B cell (primary cell): ENCODE measurements at regions of chr1 and their contacts with region 1.

Region 1: GRCh38 chr1:92960395-92961130 is 699 bp downstream of the DIPK1A start:
- DNase-seq: peak; percentile 86
- ATAC-seq: peak; percentile 42
- H3K4me3 ChIP-seq: peak overlapping the region; percentile 77 to 91 (median 86)
- H3K4me3 Mint-ChIP-seq: peak overlapping the region; percentile 92
- H3K27ac ChIP-seq: peak overlapping the region; percentile 87 to 98
- H3K27ac Mint-ChIP-seq: peak overlapping the region; percentile 94
- H3K4me1 ChIP-seq: peaks cover 62 to 80% of the 10 kb centered on the region in 2 donors
- H3K4me1 Mint-ChIP-seq: peaks cover 44% of the 10 kb centered on the region
- H3K27me3 ChIP-seq: no peaks in the 10 kb centered on the region
- H3K27me3 Mint-ChIP-seq: no peaks in the 10 kb centered on the region
- CTCF ChIP-seq: peak; percentile 66

Region 2: DNA sequence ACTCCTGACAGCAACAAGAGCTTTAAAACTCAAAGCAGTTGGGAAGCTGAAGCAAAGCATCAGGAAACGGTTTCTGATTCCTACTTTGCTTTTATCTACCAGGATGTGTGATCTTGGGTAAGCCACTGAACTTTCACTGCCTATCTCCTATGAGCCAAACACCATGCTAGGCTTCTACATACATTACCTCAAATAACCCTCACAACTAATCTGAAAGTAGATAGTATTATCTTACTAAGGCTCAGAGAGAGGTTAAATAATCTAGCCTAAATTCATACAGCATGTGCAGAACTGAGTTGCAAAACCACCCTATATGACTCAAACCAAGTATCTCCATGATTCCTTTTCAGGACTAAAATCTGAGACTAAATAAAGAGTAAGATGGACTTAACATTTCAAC is 259.4 kb before region 1 on chr1:
- CTCF ChIA-PET with region 1: no interaction called
- POLR2A ChIA-PET with region 1: no interaction called
- intact Hi-C with region 1: no loop called
- DNase-seq: no peak
- ATAC-seq: no peak
- H3K4me3 ChIP-seq: no peak overlapping the region
- H3K4me3 Mint-ChIP-seq: no peak overlapping the region
- H3K27ac ChIP-seq: no peak overlapping the region
- H3K27ac Mint-ChIP-seq: no peak overlapping the region
- H3K4me1 ChIP-seq: no peaks in the 10 kb centered on the region
- H3K4me1 Mint-ChIP-seq: no peaks in the 10 kb centered on the region
- H3K27me3 ChIP-seq: no peaks in the 10 kb centered on the region
- H3K27me3 Mint-ChIP-seq: no peaks in the 10 kb centered on the region
- CTCF ChIP-seq: no peak

Region 3: DNA sequence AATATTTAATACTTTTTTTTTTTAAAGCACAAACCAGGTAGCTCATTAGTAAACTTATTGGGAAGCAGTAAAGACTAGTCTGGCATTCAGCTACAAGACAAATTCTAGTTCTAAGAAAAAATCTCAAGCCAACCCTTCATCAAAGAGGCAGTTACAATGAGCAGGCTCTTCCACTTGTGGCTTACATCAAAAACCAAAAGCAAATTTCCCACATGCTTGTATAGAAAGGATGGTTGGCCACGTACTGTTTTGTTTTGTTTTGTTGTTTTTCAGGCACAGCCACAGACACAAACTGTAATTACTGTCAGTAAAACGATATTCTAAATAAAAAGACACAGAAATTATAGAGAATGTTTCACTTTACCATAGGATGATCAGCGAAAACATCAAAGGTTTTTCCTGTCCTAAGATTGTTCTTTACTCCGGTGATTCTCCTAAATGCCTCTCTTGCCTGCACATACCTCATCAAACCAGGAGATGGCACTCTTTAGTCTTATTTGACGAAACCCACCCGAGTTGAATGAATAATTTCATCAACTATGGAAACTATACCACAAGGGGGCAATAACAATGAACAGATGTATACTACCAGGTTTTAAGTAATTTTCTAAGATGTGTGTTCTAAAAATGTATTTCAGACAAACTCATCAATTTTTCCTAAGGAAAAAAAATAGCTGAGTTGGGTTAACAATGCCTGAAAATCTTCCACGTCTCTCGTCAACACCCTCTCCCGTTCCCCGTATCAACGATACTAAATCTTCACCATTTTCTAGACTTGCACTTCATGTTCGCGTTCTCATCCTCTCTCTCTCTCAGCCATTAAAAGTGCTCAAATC is 101.8 kb before region 1 on chr1:
- CTCF ChIA-PET with region 1: interaction called, 200 read pairs
- POLR2A ChIA-PET with region 1: interaction called, 11 read pairs
- intact Hi-C with region 1: loop called (anchors 1 kb)
- DNase-seq: peak; percentile 87
- ATAC-seq: peak; percentile 98
- H3K4me3 ChIP-seq: no peak overlapping the region
- H3K4me3 Mint-ChIP-seq: peak overlapping the region; percentile 2
- H3K27ac ChIP-seq: peak overlapping the region in 1 of 2 donors; percentile 38
- H3K27ac Mint-ChIP-seq: peak overlapping the region; percentile 0
- H3K4me1 ChIP-seq: peaks cover 0 to 4% of the 10 kb centered on the region in 2 donors
- H3K4me1 Mint-ChIP-seq: peaks cover 13% of the 10 kb centered on the region
- H3K27me3 ChIP-seq: no peaks in the 10 kb centered on the region
- H3K27me3 Mint-ChIP-seq: no peaks in the 10 kb centered on the region
- CTCF ChIP-seq: peak; percentile 99

Region 4: GRCh38 chr1:92910081-92910480 is 50.5 kb before region 1 on chr1:
- CTCF ChIA-PET with region 1: interaction called, 5 read pairs
- POLR2A ChIA-PET with region 1: no interaction called
- intact Hi-C with region 1: loop called (anchors 5 kb)
- DNase-seq: no peak
- ATAC-seq: no peak
- H3K4me3 ChIP-seq: no peak overlapping the region
- H3K4me3 Mint-ChIP-seq: no peak overlapping the region
- H3K27ac ChIP-seq: no peak overlapping the region
- H3K27ac Mint-ChIP-seq: no peak overlapping the region
- H3K4me1 ChIP-seq: peaks cover 10 to 16% of the 10 kb centered on the region in 2 donors
- H3K4me1 Mint-ChIP-seq: peaks cover 50% of the 10 kb centered on the region
- H3K27me3 ChIP-seq: no peaks in the 10 kb centered on the region
- H3K27me3 Mint-ChIP-seq: no peaks in the 10 kb centered on the region
- CTCF ChIP-seq: no peak

Region 5: GRCh38 chr1:92975551-92976232 is 15.1 kb after region 1 on chr1:
- CTCF ChIA-PET with region 1: interaction called, 174 read pairs
- POLR2A ChIA-PET with region 1: interaction called, 116 read pairs
- intact Hi-C with region 1: loop called (anchors 1 kb)
- DNase-seq: peak; percentile 89
- ATAC-seq: peak; percentile 74
- H3K4me3 ChIP-seq: peak overlapping the region in 2 of 5 experiments; percentile 30 to 40
- H3K4me3 Mint-ChIP-seq: peak overlapping the region; percentile 80
- H3K27ac ChIP-seq: peak overlapping the region; percentile 88 to 90
- H3K27ac Mint-ChIP-seq: peak overlapping the region; percentile 98
- H3K4me1 ChIP-seq: peaks cover 88 to 90% of the 10 kb centered on the region in 2 donors
- H3K4me1 Mint-ChIP-seq: peaks cover 78% of the 10 kb centered on the region
- H3K27me3 ChIP-seq: no peaks in the 10 kb centered on the region
- H3K27me3 Mint-ChIP-seq: no peaks in the 10 kb centered on the region
- CTCF ChIP-seq: no peak

Region 6: GRCh38 chr1:92994105-92994712 is 33.6 kb after region 1 on chr1:
- CTCF ChIA-PET with region 1: interaction called, 295 read pairs
- POLR2A ChIA-PET with region 1: interaction called, 32 read pairs
- intact Hi-C with region 1: loop called (anchors 1 kb)
- DNase-seq: peak; percentile 89
- ATAC-seq: peak; percentile 96
- H3K4me3 ChIP-seq: no peak overlapping the region
- H3K4me3 Mint-ChIP-seq: no peak overlapping the region
- H3K27ac ChIP-seq: no peak overlapping the region
- H3K27ac Mint-ChIP-seq: peak overlapping the region; percentile 76
- H3K4me1 ChIP-seq: peaks cover 35 to 41% of the 10 kb centered on the region in 2 donors
- H3K4me1 Mint-ChIP-seq: peaks cover 40% of the 10 kb centered on the region
- H3K27me3 ChIP-seq: no peaks in the 10 kb centered on the region
- H3K27me3 Mint-ChIP-seq: no peaks in the 10 kb centered on the region
- CTCF ChIP-seq: peak; percentile 87

Region 7: DNA sequence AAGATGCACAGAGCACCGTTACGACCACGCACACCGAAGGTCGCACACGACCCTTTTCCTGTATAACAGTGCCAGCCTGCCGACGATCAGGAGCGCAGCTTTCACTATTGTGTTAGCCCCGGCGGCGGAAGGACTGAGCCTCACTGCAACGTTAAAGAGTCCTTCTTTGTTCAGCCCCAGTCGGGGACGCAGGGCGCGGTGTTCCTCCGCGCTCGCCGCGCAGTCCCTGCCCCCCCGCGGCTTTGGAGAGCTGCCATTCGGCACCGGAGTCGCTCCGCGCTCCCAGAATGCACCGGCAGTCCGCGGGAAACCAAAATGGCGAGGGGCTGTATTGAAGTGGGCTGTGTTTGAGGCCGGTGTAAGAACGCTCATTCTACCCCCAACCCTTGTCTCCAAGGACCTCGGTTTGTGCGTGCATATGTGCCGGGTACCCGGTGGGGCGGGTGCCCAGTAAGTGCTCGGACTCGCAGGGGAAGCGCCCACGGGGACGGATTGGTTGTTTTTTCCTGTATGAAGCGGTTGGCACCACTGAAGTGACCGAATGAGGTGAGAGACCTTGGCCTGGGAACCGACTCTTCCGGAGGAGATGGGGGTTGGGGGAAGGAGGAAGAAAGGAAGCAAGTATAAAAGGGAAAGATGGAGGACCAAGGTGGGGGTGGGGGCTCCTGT is 118.6 kb after region 1 on chr1 and contains the start of gene MTF2:
- CTCF ChIA-PET with region 1: interaction called, 3 read pairs
- POLR2A ChIA-PET with region 1: interaction called, 4 read pairs
- intact Hi-C with region 1: loop called (anchors 2 kb)
- DNase-seq: peak; percentile 95
- ATAC-seq: peak; percentile 92
- H3K4me3 ChIP-seq: peak within 1 kb of the TSS; percentile 85 to 98 (median 89)
- H3K4me3 Mint-ChIP-seq: peak within 1 kb of the TSS; percentile 100
- H3K27ac ChIP-seq: peak within 1 kb of the TSS; percentile 80 to 87
- H3K27ac Mint-ChIP-seq: peak within 1 kb of the TSS; percentile 99
- H3K4me1 ChIP-seq: peaks cover 24 to 30% of the 10 kb centered on the region in 2 donors
- H3K4me1 Mint-ChIP-seq: peaks cover 46% of the 10 kb centered on the region
- H3K27me3 ChIP-seq: no peaks in the 10 kb centered on the region
- H3K27me3 Mint-ChIP-seq: no peaks in the 10 kb centered on the region
- CTCF ChIP-seq: no peak
- total RNA-seq, gene MTF2: 66.2 and 68.6 TPM in 2 replicates

Region 8: GRCh38 chr1:93846211-93846991 is 885.8 kb after region 1 on chr1:
- CTCF ChIA-PET with region 1: no interaction called
- POLR2A ChIA-PET with region 1: no interaction called
- intact Hi-C with region 1: loop called (anchors 5 kb)
- DNase-seq: peak; percentile 94
- ATAC-seq: peak; percentile 57
- H3K4me3 ChIP-seq: peak overlapping the region; percentile 45 to 90 (median 86)
- H3K4me3 Mint-ChIP-seq: peak overlapping the region; percentile 95
- H3K27ac ChIP-seq: peak overlapping the region; percentile 91 to 92
- H3K27ac Mint-ChIP-seq: peak overlapping the region; percentile 100
- H3K4me1 ChIP-seq: peaks cover 5 to 30% of the 10 kb centered on the region in 2 donors
- H3K4me1 Mint-ChIP-seq: peaks cover 24% of the 10 kb centered on the region
- H3K27me3 ChIP-seq: no peaks in the 10 kb centered on the region
- H3K27me3 Mint-ChIP-seq: peaks cover 4% of the 10 kb centered on the region
- CTCF ChIP-seq: no peak